ENCODE measurements at regions of chr7 and their contacts with region 1.

Region 1: GRCh38 chr7:1028031-1028770 is 16.1 kb upstream of the GPR146 start:
- DNase-seq: peak; percentile 93

Region 2: GRCh38 chr7:1044191-1045068 is 16.2 kb after region 1 on chr7 and contains the start of gene GPR146:
- intact Hi-C with region 1: loop called (anchors 1 kb)
- DNase-seq: peak; percentile 97
- total RNA-seq, gene GPR146: 12.6 TPM

Region 3: GRCh38 chr7:1059200-1060091 is 31.2 kb after region 1 on chr7:
- intact Hi-C with region 1: loop called (anchors 5 kb)
- DNase-seq: no peak